Mammary epithelial cell (primary cell): ENCODE measurements at regions of chr5 and their contacts with region 1.

Region 1: GRCh38 chr5:160342403-160342941 is 28.0 kb downstream of the C1QTNF2 start:
- DNase-seq: peak; percentile 83
- H3K4me3 ChIP-seq: no peak overlapping the region
- H3K27ac ChIP-seq: no peak overlapping the region
- H3K4me1 ChIP-seq: peaks cover 11% of the 10 kb centered on the region
- H3K27me3 ChIP-seq: no peaks in the 10 kb centered on the region
- CTCF ChIP-seq: no peak

Region 2: GRCh38 chr5:160021831-160022446 is 320.5 kb before region 1 on chr5:
- CTCF ChIA-PET with region 1: interaction called, 3 read pairs
- dilution Hi-C with region 1: no loop called
- in situ Hi-C with region 1: loop called in 1 of 2 experiments (anchors 25 kb)
- intact Hi-C with region 1: loop called (anchors 1 kb)
- DNase-seq: peak; percentile 53
- H3K4me3 ChIP-seq: no peak overlapping the region
- H3K27ac ChIP-seq: no peak overlapping the region
- H3K4me1 ChIP-seq: no peaks in the 10 kb centered on the region
- H3K27me3 ChIP-seq: no peaks in the 10 kb centered on the region
- CTCF ChIP-seq: peak; percentile 71 to 78

Region 3: DNA sequence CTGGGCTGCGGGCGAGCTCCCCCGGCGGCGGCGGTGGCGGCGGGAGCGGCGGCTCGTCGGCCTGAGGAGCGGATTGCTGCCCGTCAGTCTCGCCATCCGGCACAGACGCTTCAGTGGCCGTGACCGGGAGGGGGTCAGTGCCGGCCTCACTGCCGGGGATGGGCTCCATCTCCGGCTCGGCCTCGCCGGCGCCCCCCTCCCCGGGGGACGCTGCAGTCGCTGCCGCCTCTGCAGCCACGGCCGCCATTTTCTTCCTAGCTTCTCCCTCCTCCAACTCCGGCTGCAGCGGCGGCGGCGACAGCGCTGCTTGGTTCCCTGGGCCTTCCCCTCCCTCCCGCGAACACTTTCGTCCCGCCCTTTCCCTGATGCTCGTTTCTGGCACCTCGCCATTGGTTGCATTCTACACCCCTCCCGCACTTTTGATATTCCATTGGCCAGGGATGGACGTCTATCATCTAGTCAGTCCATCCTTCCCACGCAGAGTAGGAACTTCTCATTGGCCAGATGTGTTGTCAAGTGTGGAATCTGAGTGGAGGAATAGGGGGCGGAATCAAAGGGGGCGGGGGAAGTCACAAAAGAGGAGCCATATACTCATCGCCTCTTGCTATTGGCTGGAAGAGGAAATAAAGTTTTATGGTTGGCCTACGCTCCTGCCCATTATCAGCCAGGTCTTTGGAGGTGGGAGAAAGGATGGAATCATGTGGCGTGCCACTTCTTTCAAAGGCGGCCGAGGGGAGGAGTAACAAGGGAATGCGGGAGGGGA is 223.1 kb before region 1 on chr5 and contains the start of gene PWWP2A:
- CTCF ChIA-PET with region 1: no interaction called
- dilution Hi-C with region 1: no loop called
- in situ Hi-C with region 1: no loop called
- intact Hi-C with region 1: loop called (anchors 1 kb)
- DNase-seq: peak; percentile 100
- H3K4me3 ChIP-seq: peak within 1 kb of the TSS; percentile 85 to 99 (median 99)
- H3K27ac ChIP-seq: peak within 1 kb of the TSS; percentile 60
- H3K4me1 ChIP-seq: peaks cover 7% of the 10 kb centered on the region
- H3K27me3 ChIP-seq: no peaks in the 10 kb centered on the region
- CTCF ChIP-seq: peak in 1 of 2 donors; percentile 17
- total RNA-seq, gene PWWP2A: 14.7 to 16.7 TPM

Region 4: DNA sequence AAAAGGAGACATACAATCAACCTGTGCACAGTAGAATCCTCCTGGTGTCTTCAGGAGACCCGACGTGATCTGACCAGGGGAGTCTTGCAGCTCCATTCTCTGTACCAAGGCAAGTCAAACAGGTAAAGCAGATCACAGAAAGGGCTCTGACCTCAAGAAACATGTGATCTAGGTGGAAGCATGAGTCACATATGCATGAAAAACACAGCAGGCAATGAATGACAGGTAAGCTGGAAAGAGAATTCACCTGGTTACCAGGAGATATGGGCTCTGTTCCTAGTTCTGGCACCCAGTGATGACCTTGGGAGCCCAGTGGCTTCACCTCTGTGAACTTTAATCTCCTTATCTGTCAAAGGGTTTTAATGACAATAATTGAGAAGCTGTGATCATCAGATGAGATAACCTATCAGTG is 132.5 kb before region 1 on chr5:
- CTCF ChIA-PET with region 1: no interaction called
- dilution Hi-C with region 1: no loop called
- in situ Hi-C with region 1: loop called in 1 of 2 experiments (anchors 10 kb)
- intact Hi-C with region 1: no loop called
- DNase-seq: peak; percentile 76
- H3K4me3 ChIP-seq: no peak overlapping the region
- H3K27ac ChIP-seq: no peak overlapping the region
- H3K4me1 ChIP-seq: peaks cover 15% of the 10 kb centered on the region
- H3K27me3 ChIP-seq: no peaks in the 10 kb centered on the region
- CTCF ChIP-seq: no peak

Region 5: GRCh38 chr5:160287378-160288051 is 55.0 kb before region 1 on chr5:
- CTCF ChIA-PET with region 1: interaction called, 3 read pairs
- dilution Hi-C with region 1: no loop called
- in situ Hi-C with region 1: no loop called
- intact Hi-C with region 1: loop called (anchors 1 kb)
- DNase-seq: peak; percentile 65
- H3K4me3 ChIP-seq: no peak overlapping the region
- H3K27ac ChIP-seq: no peak overlapping the region
- H3K4me1 ChIP-seq: peaks cover 55% of the 10 kb centered on the region
- H3K27me3 ChIP-seq: no peaks in the 10 kb centered on the region
- CTCF ChIP-seq: no peak

Region 6: DNA sequence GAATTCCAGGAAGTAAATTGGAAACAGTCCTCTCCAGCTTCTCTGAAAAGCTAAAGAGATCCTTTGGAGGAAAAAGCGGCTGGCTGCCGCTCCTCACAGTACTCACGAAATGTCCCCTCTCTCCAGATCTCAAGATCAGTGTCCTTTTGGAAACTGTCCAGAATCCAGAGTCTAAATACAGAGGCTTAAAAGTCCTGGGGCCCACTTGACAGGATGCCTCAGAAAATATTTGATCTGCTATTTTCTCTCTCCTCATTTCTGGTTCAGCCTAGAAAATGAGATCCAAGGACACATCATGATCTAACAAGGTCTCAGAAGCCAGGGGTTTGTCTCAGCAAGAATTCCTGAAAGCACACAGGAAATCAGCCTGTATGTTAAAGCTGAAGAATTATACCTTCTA is 20.7 kb after region 1 on chr5:
- CTCF ChIA-PET with region 1: no interaction called
- dilution Hi-C with region 1: no loop called
- in situ Hi-C with region 1: no loop called
- intact Hi-C with region 1: no loop called
- DNase-seq: no peak
- H3K4me3 ChIP-seq: no peak overlapping the region
- H3K27ac ChIP-seq: no peak overlapping the region
- H3K4me1 ChIP-seq: no peaks in the 10 kb centered on the region
- H3K27me3 ChIP-seq: no peaks in the 10 kb centered on the region
- CTCF ChIP-seq: no peak

Region 7: DNA sequence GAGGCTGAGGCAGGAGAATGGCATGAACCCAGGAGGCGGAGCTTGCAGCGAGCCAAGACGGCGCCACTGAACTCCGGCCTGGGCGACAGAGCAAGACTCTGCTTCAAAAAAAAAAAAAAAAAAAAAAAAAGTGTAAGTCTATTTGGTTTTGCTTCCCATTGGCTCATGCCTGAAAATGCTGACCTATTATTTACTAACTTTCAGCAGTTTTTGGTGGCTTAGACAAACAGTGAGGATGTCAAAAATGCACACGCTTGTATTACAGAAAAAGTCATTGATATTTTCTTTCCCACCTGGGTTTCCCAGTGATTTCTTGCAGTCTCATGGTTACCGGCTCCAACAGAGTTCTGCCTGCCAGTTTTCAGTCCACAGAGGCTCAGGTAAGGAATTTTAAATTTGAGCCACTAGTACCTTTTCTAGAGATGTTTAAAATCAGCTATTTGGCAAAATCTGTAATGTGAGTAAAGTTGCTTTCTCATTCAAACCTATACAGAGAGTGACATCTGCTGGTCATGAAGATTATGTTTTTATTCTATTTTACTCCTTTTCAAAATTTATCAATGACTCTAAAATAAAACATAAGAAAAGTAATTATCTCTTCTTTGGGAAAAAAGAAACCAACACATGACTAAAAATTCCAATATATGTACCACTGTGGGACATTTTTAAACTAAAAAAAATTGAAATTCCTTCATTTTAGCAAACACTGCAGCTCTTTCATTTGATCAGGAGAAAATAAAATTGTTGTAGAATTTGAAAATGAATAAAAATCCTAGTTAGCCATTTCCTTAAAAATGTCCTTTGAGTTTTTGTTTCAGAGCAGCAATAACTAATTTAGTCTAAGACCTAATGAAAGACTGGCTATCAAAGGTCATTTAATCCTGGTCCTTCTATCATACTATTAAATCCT is 48.6 kb after region 1 on chr5:
- CTCF ChIA-PET with region 1: no interaction called
- dilution Hi-C with region 1: no loop called
- in situ Hi-C with region 1: no loop called
- intact Hi-C with region 1: loop called (anchors 1 kb)
- DNase-seq: no peak
- H3K4me3 ChIP-seq: no peak overlapping the region
- H3K27ac ChIP-seq: no peak overlapping the region
- H3K4me1 ChIP-seq: no peaks in the 10 kb centered on the region
- H3K27me3 ChIP-seq: no peaks in the 10 kb centered on the region
- CTCF ChIP-seq: peak; percentile 41 to 45